Transverse colon (tissue), 4 donors: ENCODE measurements at regions of chr7 and their contacts with region 1.

Region 1: DNA sequence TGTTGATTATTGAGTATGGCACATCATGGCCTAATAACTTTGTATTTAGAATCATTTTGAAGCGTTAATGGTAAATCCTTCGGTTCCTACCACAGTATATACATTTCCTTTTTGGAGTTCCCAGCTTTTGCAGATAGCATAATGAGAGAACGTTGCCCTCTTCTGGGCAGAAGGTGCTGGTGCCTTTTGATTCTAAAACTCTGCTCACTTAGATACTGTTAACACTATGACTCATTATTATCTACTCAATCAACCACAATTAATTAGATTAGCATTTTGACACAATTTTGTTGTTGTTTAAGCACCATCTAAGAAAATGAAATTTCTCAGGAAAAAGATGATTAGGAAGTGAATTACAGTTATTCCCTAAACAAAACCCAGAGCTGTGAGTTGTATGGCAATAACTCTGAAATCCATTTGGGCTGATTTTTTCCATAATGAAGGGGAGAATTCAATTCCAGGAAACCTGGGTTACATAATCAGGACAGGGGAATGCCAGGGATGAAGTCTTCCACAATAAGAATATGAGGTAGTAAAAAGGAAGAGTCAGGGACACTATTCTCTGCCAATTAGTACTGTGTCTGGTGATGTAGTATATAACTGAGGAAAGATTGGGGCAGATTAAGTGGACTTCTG is 11.5 kb upstream of the DLD start:
- DNase-seq: peak; percentile 46
- H3K4me3 ChIP-seq: no peak overlapping the region
- H3K27ac ChIP-seq: no peak overlapping the region
- H3K4me1 ChIP-seq: peaks cover 0 to 12% (median 2%) of the 10 kb centered on the region in 4 donors
- H3K27me3 ChIP-seq: no peaks in the 10 kb centered on the region
- CTCF ChIP-seq: peak; percentile 71 to 83 (median 74)
- EP300 ChIP-seq: no peak
- POLR2A ChIP-seq: no peak

Region 2: DNA sequence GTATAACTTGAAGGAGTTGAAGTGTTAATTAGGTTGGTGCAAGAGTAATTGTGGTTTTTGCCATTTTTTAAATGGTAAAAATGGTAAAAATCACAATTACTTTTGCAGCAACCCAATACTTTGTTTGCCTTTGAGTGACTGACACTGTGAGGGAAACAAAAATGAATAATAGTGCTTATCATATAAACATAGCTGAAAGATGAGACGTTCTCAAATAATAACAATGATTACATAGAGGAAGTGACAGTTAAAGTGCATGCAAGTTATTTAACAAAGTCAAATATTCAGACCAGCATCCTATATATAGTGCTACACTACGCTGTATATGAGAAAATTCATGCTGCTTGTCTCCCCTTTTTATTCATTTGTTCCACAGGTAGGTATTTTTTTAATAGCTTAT is 715.4 kb before region 1 on chr7:
- in situ Hi-C with region 1: no loop called
- intact Hi-C with region 1: no loop called
- DNase-seq: no peak
- H3K4me3 ChIP-seq: no peak overlapping the region
- H3K27ac ChIP-seq: no peak overlapping the region
- H3K4me1 ChIP-seq: peaks cover 0 to 5% (median 0%) of the 10 kb centered on the region in 4 donors
- H3K27me3 ChIP-seq: no peaks in the 10 kb centered on the region
- CTCF ChIP-seq: no peak
- EP300 ChIP-seq: no peak
- POLR2A ChIP-seq: no peak

Region 3: DNA sequence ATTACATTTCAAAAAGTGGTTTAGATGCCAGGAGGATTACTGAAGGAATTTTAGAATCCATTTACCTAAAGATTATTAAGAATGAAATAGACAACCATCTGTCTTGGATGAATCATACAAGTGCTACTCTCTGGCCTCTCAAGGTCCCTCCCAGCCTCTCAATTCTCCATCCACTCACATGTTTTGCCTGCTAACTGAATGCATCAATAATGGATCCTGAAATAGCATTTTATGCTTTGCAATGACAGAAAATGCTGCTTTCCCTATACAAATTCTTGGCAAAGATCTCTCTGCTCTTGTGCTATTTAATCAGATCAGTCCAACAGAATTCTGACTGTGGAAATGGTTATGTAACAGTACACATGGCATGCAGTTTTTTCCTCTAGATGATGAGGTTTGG is 642.7 kb before region 1 on chr7:
- in situ Hi-C with region 1: no loop called
- intact Hi-C with region 1: no loop called
- DNase-seq: no peak
- H3K4me3 ChIP-seq: no peak overlapping the region
- H3K27ac ChIP-seq: no peak overlapping the region
- H3K4me1 ChIP-seq: peaks cover 0 to 4% (median 0%) of the 10 kb centered on the region in 4 donors
- H3K27me3 ChIP-seq: no peaks in the 10 kb centered on the region
- CTCF ChIP-seq: no peak
- EP300 ChIP-seq: no peak
- POLR2A ChIP-seq: no peak

Region 4: GRCh38 chr7:107579885-107580715 is 299.4 kb before region 1 on chr7 and contains the start of gene BCAP29:
- in situ Hi-C with region 1: loop called in 1 of 4 experiments (anchors 25 kb)
- intact Hi-C with region 1: no loop called
- DNase-seq: peak; percentile 81
- H3K4me3 ChIP-seq: peak within 1 kb of the TSS; percentile 69 to 86 (median 79)
- H3K27ac ChIP-seq: peak within 1 kb of the TSS; percentile 95 to 97 (median 96)
- H3K4me1 ChIP-seq: peaks cover 13 to 42% (median 20%) of the 10 kb centered on the region in 4 donors
- H3K27me3 ChIP-seq: no peaks in the 10 kb centered on the region
- CTCF ChIP-seq: peak in 3 of 5 experiments; percentile 22 to 40 (median 25)
- EP300 ChIP-seq: peak; percentile 25
- POLR2A ChIP-seq: peak; percentile 59
- total RNA-seq, gene BCAP29: 8.6 to 96.5 (median 73.1) TPM

Region 5: GRCh38 chr7:107785926-107786325 is 93.6 kb before region 1 on chr7:
- in situ Hi-C with region 1: loop called in 2 of 4 experiments (anchors 10 kb)
- intact Hi-C with region 1: no loop called
- DNase-seq: peak; percentile 44
- H3K4me3 ChIP-seq: no peak overlapping the region
- H3K27ac ChIP-seq: peak overlapping the region; percentile 50 to 83 (median 66)
- H3K4me1 ChIP-seq: peaks cover 9 to 29% (median 21%) of the 10 kb centered on the region in 4 donors
- H3K27me3 ChIP-seq: no peaks in the 10 kb centered on the region
- CTCF ChIP-seq: no peak
- EP300 ChIP-seq: peak; percentile 92
- POLR2A ChIP-seq: no peak

Region 6: DNA sequence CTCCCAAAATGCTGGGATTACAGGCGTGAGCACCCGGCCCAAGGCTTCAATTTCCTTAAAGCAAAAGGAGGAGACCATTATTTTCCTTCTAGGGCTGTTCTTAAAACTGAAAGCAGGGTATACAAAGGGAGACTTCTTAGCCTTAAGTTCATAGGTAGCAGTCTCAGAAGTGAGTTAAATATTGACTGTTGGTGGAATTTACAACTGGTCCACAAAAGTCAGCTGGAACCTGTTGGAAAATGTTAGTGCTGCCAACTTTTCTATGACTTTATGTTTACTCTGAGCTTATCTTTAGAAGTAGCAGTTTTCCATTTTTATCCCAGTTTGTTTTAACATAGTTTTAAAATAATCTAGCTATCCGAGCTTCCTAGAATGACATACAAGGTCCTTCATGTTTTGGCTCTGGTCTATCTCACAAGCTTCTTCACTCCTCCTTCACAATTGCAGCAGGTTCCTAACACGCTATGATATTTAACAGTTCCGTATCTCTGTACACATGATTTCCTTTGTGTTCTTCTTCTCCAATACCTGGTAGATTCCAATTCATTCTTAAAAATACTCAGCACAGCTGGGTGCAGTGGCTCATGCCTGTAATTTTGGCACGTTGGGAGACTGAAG is 79.8 kb before region 1 on chr7:
- in situ Hi-C with region 1: no loop called
- intact Hi-C with region 1: no loop called
- DNase-seq: no peak
- H3K4me3 ChIP-seq: peak overlapping the region in 2 of 4 donors; percentile 25 to 43
- H3K27ac ChIP-seq: peak overlapping the region; percentile 67 to 79 (median 76)
- H3K4me1 ChIP-seq: peaks cover 9 to 23% (median 17%) of the 10 kb centered on the region in 4 donors
- H3K27me3 ChIP-seq: no peaks in the 10 kb centered on the region
- CTCF ChIP-seq: no peak
- EP300 ChIP-seq: no peak
- POLR2A ChIP-seq: no peak

Region 7: DNA sequence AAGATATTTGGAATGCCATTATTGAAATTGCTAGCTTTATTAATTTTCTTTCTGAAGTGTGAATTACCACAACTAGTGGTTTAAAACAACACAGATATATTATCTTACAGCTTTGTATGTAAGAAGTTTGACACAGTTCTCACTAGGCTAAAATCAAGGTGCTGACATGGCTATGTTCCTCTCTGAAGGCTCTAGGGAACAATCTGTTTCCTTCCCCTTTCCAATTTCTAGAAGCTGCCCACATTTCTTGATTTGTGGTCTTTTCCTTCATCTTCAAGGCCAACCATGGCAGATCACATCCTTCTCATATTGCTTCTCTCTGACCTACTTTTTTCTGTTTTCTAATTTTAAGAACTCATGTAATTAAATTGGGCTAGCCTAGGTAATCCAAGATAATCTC is 33.2 kb before region 1 on chr7:
- in situ Hi-C with region 1: no loop called
- intact Hi-C with region 1: no loop called
- DNase-seq: no peak
- H3K4me3 ChIP-seq: no peak overlapping the region
- H3K27ac ChIP-seq: no peak overlapping the region
- H3K4me1 ChIP-seq: peaks cover 0 to 26% (median 8%) of the 10 kb centered on the region in 4 donors
- H3K27me3 ChIP-seq: no peaks in the 10 kb centered on the region
- CTCF ChIP-seq: no peak
- EP300 ChIP-seq: no peak
- POLR2A ChIP-seq: no peak